ENCODE measurements at regions of chr10 and their contacts with region 1.

Region 1: GRCh38 chr10:123573236-123574108 is 92.7 kb upstream of the GPR26 start:
- DNase-seq: peak; percentile 76
- H3K4me3 Mint-ChIP-seq: no peak overlapping the region
- H3K27ac Mint-ChIP-seq: no peak overlapping the region
- H3K4me1 Mint-ChIP-seq: no peaks in the 10 kb centered on the region
- H3K27me3 Mint-ChIP-seq: peaks cover 2% of the 10 kb centered on the region

Region 2: DNA sequence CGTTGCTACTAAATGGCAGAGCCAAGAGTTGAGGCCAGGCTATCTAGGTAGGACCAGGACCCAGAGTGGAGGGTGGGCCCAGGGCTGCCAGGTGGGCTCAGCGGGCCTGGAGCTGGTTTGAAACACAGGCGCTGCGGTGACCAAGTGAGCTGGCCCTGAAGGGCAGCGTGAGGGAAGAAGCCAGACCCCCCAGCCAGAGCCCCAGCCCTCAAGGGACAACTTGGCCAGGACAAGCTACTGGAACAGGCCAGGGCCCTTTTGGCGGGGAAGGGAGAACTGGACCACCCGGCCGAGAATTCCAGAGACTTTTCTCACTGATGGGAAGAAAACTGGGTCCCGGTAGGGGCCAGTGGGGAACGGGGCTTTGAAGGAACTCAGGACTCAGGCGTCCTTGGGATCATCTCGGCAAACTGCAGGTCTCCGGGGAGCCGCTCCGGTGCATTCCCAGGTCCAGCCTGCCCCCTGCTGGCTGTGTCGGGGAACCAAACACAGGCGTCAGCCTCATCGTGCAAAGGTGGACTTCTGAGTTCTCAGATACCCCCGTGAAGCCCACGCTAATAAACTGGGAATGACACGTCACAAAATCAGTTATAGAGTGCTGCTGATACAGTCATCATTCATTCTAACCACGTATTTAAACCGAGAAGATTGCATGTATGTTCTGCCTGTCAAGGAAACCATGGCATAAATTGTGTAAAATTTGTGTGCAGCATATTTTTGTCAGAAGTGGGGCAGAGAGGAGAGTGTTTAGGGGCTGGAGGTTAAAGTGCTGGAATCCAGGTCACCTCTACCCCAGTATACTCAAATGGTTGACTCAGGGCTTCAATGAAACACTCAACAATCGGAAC is 394.1 kb after region 1 on chr10:
- intact Hi-C with region 1: loop called (anchors 2 kb)
- DNase-seq: peak; percentile 84
- H3K4me3 Mint-ChIP-seq: no peak overlapping the region
- H3K27ac Mint-ChIP-seq: no peak overlapping the region
- H3K4me1 Mint-ChIP-seq: no peaks in the 10 kb centered on the region
- H3K27me3 Mint-ChIP-seq: peaks cover 38% of the 10 kb centered on the region